ENCODE measurements at regions of chr13 and their contacts with region 1.

Region 1: GRCh38 chr13:31742097-31742734 is 2.9 kb downstream of the RXFP2 start:
- DNase-seq: peak; percentile 22
- ATAC-seq: peak; percentile 91
- H3K4me3 ChIP-seq: no peak overlapping the region
- H3K27ac ChIP-seq: no peak overlapping the region
- H3K4me1 ChIP-seq: no peaks in the 10 kb centered on the region
- H3K27me3 ChIP-seq: 0 out of 2 replicates have a peak, but pooled peaks cover 3% of the 10 kb centered on the region
- CTCF ChIP-seq: peak; percentile 91

Region 2: GRCh38 chr13:31431722-31432137 is 310.5 kb before region 1 on chr13:
- CTCF ChIA-PET with region 1: interaction called, 7 read pairs
- POLR2A ChIA-PET with region 1: no interaction called
- in situ Hi-C with region 1: no loop called
- intact Hi-C with region 1: loop called (anchors 2 kb)
- DNase-seq: peak; percentile 27
- ATAC-seq: no peak
- H3K4me3 ChIP-seq: no peak overlapping the region
- H3K27ac ChIP-seq: no peak overlapping the region
- H3K4me1 ChIP-seq: no peaks in the 10 kb centered on the region
- H3K27me3 ChIP-seq: no peaks in the 10 kb centered on the region; the same call in 1 of the 2 replicates
- CTCF ChIP-seq: peak; percentile 83

Region 3: GRCh38 chr13:31538067-31539042 is 203.9 kb before region 1 on chr13:
- CTCF ChIA-PET with region 1: no interaction called
- POLR2A ChIA-PET with region 1: no interaction called
- in situ Hi-C with region 1: no loop called
- intact Hi-C with region 1: loop called (anchors 5 kb)
- DNase-seq: no peak
- ATAC-seq: no peak
- H3K4me3 ChIP-seq: no peak overlapping the region
- H3K27ac ChIP-seq: no peak overlapping the region
- H3K4me1 ChIP-seq: no peaks in the 10 kb centered on the region; the same call in 1 of the 2 replicates
- H3K27me3 ChIP-seq: no peaks in the 10 kb centered on the region
- CTCF ChIP-seq: peak; percentile 47

Region 4: GRCh38 chr13:31587698-31588266 is 154.4 kb before region 1 on chr13:
- CTCF ChIA-PET with region 1: no interaction called
- POLR2A ChIA-PET with region 1: no interaction called
- in situ Hi-C with region 1: no loop called
- intact Hi-C with region 1: no loop called
- DNase-seq: no peak
- ATAC-seq: no peak
- H3K4me3 ChIP-seq: no peak overlapping the region
- H3K27ac ChIP-seq: no peak overlapping the region
- H3K4me1 ChIP-seq: no peaks in the 10 kb centered on the region
- H3K27me3 ChIP-seq: no peaks in the 10 kb centered on the region
- CTCF ChIP-seq: no peak

Region 5: GRCh38 chr13:31870511-31870910 is 128.3 kb after region 1 on chr13:
- CTCF ChIA-PET with region 1: no interaction called
- POLR2A ChIA-PET with region 1: no interaction called
- in situ Hi-C with region 1: no loop called
- intact Hi-C with region 1: no loop called
- DNase-seq: no peak
- ATAC-seq: no peak
- H3K4me3 ChIP-seq: no peak overlapping the region
- H3K27ac ChIP-seq: no peak overlapping the region
- H3K4me1 ChIP-seq: no peaks in the 10 kb centered on the region
- H3K27me3 ChIP-seq: no peaks in the 10 kb centered on the region; the same call in none of the 2 replicates
- CTCF ChIP-seq: no peak

Region 6: DNA sequence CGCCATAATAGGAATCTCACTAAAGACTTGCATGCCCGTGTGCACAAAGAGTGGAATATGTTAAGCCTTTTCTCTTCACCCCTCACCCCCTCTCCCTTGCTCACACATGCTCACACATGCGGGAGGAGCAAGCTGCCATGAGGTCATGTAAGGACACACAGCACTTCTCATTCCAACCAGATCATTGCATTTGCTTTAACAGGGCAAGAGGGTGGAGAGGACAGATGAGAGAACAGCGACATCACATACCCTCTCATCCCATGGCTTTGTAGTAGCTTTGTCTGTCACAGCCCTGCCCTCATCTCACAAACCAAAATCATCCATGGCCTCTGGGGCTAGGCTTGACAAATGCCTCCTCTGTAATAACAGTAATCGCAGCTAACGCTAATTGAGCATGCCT is 143.8 kb after region 1 on chr13:
- CTCF ChIA-PET with region 1: no interaction called
- POLR2A ChIA-PET with region 1: no interaction called
- in situ Hi-C with region 1: no loop called
- intact Hi-C with region 1: no loop called
- DNase-seq: no peak
- ATAC-seq: no peak
- H3K4me3 ChIP-seq: no peak overlapping the region
- H3K27ac ChIP-seq: no peak overlapping the region
- H3K4me1 ChIP-seq: no peaks in the 10 kb centered on the region
- H3K27me3 ChIP-seq: no peaks in the 10 kb centered on the region
- CTCF ChIP-seq: no peak